Activated CD8-positive, alpha-beta memory T cell treated with anti-CD3 and anti-CD28 coated beads, Interleukin-2, amount 10 ng/mL, durations not matched to agents 7 days and 5 days (primary cell): ENCODE measurements at regions of chr15 and their contacts with region 1.

Region 1: DNA sequence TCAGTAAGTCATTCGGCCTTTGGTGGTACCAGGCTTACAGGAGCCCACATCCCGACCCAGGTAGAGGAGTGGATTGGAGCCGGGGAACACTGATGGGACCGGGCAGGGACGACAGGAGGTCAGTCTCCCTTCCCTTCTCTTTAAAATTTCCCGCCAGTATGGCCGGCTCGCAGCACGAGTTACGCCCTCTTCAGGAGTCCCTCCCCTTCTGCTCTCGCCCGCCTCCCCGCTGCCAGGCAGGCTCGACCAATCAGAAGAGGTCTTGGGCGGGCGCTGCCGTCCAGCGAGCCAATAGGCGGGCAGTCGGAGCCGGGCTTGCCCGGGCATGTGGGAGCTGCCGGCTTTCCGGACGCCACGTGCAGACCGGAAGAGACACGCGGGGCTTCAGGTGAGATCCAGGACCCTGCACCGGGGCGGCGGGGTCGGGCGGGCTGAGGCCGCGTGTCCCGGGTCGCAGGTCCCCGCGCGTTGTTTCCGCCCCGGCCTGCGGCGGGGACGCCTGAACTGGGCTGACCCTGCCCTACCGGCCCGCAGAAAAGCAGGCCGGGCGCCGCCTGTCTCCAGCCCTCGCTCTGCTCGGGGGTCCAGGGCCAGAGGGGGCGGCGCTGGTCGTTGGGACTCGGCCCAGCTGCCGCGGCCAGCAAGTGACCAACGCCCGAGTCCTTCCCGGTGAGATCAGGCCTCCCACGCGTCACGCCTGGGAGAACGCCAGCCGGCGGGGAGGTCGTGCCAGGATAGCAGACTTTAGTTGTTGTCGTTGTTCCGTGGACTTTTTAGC is at the start of gene AEN:
- DNase-seq: peak; percentile 97
- ATAC-seq: peak; percentile 93
- H3K4me3 Mint-ChIP-seq: peak within 1 kb of the TSS; percentile 91
- H3K27ac Mint-ChIP-seq: peak within 1 kb of the TSS; percentile 94
- H3K4me1 Mint-ChIP-seq: peaks cover 44% of the 10 kb centered on the region
- H3K27me3 Mint-ChIP-seq: no peaks in the 10 kb centered on the region
- total RNA-seq, gene AEN: 55.7 to 57.4 TPM

Region 2: DNA sequence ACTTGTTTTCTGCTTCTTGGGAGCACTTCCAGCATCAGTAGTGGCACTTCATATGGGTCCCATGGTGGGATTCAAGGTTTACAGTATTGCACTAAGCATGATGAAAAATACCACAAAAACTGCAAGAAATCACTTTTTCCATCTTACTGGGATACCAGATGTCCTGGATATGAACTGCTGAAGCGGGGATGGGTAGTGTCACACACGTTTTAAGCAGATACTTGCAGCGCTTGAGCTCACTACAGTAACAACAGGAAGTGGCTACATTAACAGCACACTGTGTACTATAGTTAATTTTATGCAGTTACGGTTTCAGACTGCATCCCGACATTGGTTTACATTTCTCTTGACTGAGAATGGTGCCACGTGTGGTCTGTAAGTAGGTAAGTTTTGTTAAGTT is 14.1 kb after region 1 on chr15:
- CTCF ChIA-PET with region 1: interaction called, 34 read pairs
- DNase-seq: peak; percentile 73
- ATAC-seq: peak; percentile 26
- H3K4me3 Mint-ChIP-seq: peak overlapping the region; percentile 69
- H3K27ac Mint-ChIP-seq: peak overlapping the region; percentile 99
- H3K4me1 Mint-ChIP-seq: peaks cover 81% of the 10 kb centered on the region
- H3K27me3 Mint-ChIP-seq: no peaks in the 10 kb centered on the region

Region 3: DNA sequence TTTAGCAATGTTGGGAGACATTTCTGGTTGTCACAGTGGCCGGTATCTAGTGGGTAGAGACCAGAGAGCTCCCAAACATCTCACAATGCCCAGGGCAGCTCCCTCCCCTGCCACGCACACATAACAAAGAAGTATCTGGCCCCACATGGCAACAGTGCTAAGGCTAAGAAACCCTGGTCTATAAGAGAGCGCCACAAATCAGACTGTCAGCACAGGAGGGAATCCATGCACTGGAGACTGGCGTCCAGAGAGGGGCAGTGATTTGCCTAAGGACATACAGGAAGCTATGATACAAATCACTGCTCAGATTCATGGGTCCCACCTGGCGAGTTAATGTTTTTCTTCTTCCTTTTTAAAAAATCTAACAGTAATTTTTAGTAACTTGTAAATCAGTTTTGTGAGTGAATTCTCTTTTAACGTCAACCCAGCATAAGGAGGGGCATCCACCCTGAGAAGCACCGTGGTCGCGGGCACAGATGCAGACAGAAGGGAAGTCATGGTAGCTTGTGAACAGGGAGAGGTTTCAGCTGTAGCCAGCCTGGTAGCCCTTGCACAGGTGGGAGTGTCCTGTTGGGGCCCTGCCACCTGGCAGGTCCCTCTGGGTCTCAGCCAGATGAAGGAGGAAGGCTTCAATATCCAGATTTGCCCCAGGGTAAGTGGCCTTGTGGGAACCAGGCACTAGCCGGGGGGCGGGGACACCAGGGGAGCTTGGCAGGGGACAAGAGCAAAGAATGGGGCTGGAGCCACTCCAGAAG is 26.3 kb after region 1 on chr15:
- CTCF ChIA-PET with region 1: interaction called, 12 read pairs
- DNase-seq: peak; percentile 40
- ATAC-seq: no peak
- H3K4me3 Mint-ChIP-seq: no peak overlapping the region
- H3K27ac Mint-ChIP-seq: peak overlapping the region; percentile 13
- H3K4me1 Mint-ChIP-seq: peaks cover 69% of the 10 kb centered on the region
- H3K27me3 Mint-ChIP-seq: no peaks in the 10 kb centered on the region

Region 4: GRCh38 chr15:88657326-88658069 is 36.3 kb after region 1 on chr15:
- CTCF ChIA-PET with region 1: interaction called, 30 read pairs
- DNase-seq: peak; percentile 40
- ATAC-seq: no peak
- H3K4me3 Mint-ChIP-seq: no peak overlapping the region
- H3K27ac Mint-ChIP-seq: no peak overlapping the region
- H3K4me1 Mint-ChIP-seq: peaks cover 7% of the 10 kb centered on the region
- H3K27me3 Mint-ChIP-seq: no peaks in the 10 kb centered on the region

Region 5: GRCh38 chr15:88664151-88664778 is 43.1 kb after region 1 on chr15:
- CTCF ChIA-PET with region 1: interaction called, 43 read pairs
- DNase-seq: peak; percentile 63
- ATAC-seq: peak; percentile 58
- H3K4me3 Mint-ChIP-seq: no peak overlapping the region
- H3K27ac Mint-ChIP-seq: peak overlapping the region; percentile 17
- H3K4me1 Mint-ChIP-seq: peaks cover 2% of the 10 kb centered on the region
- H3K27me3 Mint-ChIP-seq: peaks cover 10% of the 10 kb centered on the region

Region 6: DNA sequence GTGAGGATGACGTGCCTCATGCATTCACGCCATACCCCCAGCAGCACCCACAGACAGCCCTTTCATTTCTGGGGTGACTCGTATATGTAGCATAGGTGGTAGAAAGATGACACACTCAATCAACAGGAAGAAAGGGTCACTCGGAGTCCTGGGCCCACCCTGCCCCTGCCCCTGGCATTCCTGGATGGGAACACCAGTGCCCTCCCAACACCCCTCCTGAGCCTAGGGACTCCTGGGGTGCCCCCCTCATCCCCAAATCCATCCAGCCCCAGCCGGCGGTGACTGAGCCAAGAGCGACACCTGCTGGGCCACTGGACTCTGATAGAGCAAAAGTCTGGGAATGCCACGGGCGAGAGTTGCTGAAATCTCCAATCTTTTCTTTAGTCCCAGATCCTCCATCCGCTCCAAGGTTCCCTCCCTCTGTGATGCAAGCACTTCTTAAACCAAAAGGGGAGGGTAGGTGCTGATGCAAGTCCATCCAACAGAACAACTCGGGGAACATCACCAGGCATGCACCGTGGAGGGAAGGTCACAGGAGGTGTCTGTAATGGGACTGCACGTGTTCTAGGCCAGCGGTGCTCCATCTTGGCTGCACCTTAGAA is 213.1 kb after region 1 on chr15:
- CTCF ChIA-PET with region 1: interaction called, 21 read pairs
- DNase-seq: peak; percentile 44
- ATAC-seq: peak; percentile 55
- H3K4me3 Mint-ChIP-seq: no peak overlapping the region
- H3K27ac Mint-ChIP-seq: no peak overlapping the region
- H3K4me1 Mint-ChIP-seq: no peaks in the 10 kb centered on the region
- H3K27me3 Mint-ChIP-seq: no peaks in the 10 kb centered on the region

Region 7: DNA sequence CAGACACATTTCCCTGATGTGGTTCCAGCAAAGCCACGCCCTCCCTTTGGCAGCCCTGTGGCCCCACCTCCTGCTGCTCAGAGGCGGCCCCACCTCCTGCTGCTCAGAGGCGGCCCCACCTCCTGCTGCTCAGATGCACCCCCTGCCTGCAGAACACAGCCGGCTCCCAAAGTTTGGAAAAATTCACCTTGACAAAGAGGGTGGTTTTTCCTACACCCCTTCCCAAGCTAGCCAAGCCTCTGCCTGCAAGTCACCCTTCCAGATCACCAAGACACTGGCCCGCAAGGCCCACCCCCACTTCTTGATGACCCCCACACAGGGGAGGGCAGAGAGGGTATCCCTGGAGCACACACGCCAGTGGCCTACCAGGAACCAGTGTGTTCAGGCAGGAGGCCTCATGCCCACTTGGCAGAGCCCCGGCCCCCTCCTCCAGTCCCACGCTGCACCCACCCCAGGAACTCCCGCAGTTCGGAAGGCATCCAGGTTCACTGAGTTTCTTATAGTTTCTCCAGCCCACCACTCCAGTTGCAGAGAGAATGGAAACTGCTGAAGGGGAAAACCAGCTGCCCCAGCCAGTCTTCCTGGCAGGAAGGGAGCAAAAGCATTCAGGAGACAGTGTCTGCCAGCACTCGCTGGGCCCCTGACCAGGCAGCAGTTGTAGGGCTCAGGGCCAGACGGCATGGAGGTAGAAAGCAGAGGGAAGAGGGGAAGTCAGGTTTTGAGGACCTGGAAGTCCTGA is 276.4 kb after region 1 on chr15:
- CTCF ChIA-PET with region 1: interaction called, 13 read pairs
- DNase-seq: peak; percentile 88
- ATAC-seq: peak; percentile 88
- H3K4me3 Mint-ChIP-seq: no peak overlapping the region
- H3K27ac Mint-ChIP-seq: no peak overlapping the region
- H3K4me1 Mint-ChIP-seq: peaks cover 28% of the 10 kb centered on the region
- H3K27me3 Mint-ChIP-seq: no peaks in the 10 kb centered on the region